B cell (primary cell): ENCODE measurements at regions of chr10 and their contacts with region 1.

Region 1: DNA sequence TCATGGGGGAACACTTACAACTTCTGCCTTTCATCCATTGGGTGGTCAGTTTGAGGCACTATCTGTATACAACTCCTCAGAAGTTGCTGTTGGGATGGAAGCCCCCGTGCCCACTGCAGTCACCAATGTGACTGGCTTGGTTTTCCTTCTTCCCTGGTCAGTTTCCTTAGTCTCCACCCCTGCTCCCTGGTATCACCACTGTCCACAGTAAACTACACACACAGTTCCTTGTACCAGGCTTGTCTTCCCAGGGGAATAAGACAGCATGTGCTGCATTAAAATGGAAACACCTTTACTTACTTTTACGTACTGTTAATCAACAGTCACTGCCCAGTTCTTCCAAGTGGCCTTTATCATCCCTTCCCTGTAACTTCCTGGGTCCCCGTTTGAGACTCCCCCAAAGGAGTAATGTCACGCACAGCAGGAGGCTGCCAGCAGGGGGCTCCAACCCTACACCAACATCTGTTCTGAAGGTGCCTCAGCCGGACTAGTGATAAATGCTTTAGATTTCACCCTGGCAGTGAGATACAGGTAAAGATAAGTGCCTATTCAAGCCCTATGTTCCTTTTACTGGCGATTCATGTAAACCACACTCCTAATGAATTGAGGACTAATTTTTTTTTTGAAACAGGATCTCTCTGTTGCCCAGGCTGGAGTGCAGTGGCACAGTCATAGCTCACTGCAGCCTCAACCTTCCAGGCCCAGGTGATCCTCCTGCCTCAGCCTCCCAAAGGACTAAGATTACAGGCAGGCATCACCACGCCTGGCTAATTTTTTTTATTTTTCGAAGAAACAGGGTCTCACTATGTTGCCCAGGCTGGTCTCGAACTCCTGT is 45.3 kb upstream of the PIK3AP1 start:
- DNase-seq: peak; percentile 83
- ATAC-seq: peak; percentile 74
- H3K4me3 ChIP-seq: no peak overlapping the region
- H3K4me3 Mint-ChIP-seq: peak overlapping the region; percentile 60
- H3K27ac ChIP-seq: peak overlapping the region; percentile 30 to 54
- H3K27ac Mint-ChIP-seq: peak overlapping the region; percentile 77
- H3K4me1 ChIP-seq: peaks cover 33% of the 10 kb centered on the region in 2 donors
- H3K4me1 Mint-ChIP-seq: peaks cover 39% of the 10 kb centered on the region
- H3K27me3 ChIP-seq: no peaks in the 10 kb centered on the region
- H3K27me3 Mint-ChIP-seq: no peaks in the 10 kb centered on the region
- CTCF ChIP-seq: peak; percentile 90

Region 2: DNA sequence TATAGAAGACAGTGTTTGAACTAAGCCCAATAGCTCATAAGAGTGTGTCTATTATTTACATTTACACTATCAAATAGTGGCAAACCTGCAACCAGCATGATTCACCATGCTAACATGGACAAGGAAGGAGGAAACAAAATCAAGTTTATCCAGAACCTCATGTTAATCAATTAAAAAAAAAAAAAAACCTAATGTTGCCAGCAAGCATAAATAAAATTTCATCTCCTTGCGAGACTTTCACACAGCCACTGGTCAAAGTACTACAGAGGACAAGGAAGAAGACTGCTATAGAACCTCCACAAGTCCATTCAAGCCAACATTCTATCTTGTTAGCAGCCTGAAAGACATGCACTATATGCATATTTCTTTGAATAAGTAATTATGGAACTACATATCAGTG is 188.6 kb before region 1 on chr10:
- CTCF ChIA-PET with region 1: no interaction called
- POLR2A ChIA-PET with region 1: no interaction called
- intact Hi-C with region 1: no loop called
- DNase-seq: no peak
- ATAC-seq: no peak
- H3K4me3 ChIP-seq: no peak overlapping the region
- H3K4me3 Mint-ChIP-seq: no peak overlapping the region
- H3K27ac ChIP-seq: no peak overlapping the region
- H3K27ac Mint-ChIP-seq: no peak overlapping the region
- H3K4me1 ChIP-seq: peaks cover 6 to 18% of the 10 kb centered on the region in 2 donors
- H3K4me1 Mint-ChIP-seq: peaks cover 52% of the 10 kb centered on the region
- H3K27me3 ChIP-seq: no peaks in the 10 kb centered on the region
- H3K27me3 Mint-ChIP-seq: no peaks in the 10 kb centered on the region
- CTCF ChIP-seq: no peak

Region 3: DNA sequence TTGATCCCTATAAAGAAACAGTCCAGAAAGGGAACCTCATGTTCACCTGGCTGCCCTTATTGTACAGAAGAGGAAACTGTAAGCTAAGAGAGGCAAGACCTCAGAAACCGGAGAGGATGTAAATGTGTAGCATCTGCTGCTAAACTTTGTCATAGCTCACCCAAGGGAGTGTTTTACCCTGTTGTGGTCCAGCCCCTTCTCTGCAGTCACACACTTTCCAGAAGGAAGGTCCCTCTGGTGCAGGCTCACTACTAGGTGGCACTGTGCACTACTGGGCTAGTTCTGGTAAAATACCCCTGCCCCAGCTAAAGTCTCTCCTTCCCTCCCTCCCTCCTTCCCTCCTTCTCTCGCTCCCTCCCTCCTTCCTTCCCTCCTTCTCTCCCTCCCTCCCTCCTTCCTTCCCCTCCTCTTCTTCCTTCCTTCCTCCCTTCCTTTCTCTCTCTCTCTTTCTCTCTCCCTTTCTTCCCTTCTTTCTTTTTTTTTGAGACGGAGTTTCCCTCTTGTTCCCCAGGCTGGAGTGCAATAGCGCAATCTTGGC is 24.0 kb after region 1 on chr10:
- CTCF ChIA-PET with region 1: interaction called, 7 read pairs
- POLR2A ChIA-PET with region 1: no interaction called
- intact Hi-C with region 1: loop called (anchors 2 kb)
- DNase-seq: peak; percentile 88
- ATAC-seq: peak; percentile 94
- H3K4me3 ChIP-seq: no peak overlapping the region
- H3K4me3 Mint-ChIP-seq: peak overlapping the region; percentile 62
- H3K27ac ChIP-seq: peak overlapping the region; percentile 64 to 87
- H3K27ac Mint-ChIP-seq: peak overlapping the region; percentile 75
- H3K4me1 ChIP-seq: peaks cover 16 to 20% of the 10 kb centered on the region in 2 donors
- H3K4me1 Mint-ChIP-seq: peaks cover 18% of the 10 kb centered on the region
- H3K27me3 ChIP-seq: no peaks in the 10 kb centered on the region
- H3K27me3 Mint-ChIP-seq: no peaks in the 10 kb centered on the region
- CTCF ChIP-seq: no peak

Region 4: DNA sequence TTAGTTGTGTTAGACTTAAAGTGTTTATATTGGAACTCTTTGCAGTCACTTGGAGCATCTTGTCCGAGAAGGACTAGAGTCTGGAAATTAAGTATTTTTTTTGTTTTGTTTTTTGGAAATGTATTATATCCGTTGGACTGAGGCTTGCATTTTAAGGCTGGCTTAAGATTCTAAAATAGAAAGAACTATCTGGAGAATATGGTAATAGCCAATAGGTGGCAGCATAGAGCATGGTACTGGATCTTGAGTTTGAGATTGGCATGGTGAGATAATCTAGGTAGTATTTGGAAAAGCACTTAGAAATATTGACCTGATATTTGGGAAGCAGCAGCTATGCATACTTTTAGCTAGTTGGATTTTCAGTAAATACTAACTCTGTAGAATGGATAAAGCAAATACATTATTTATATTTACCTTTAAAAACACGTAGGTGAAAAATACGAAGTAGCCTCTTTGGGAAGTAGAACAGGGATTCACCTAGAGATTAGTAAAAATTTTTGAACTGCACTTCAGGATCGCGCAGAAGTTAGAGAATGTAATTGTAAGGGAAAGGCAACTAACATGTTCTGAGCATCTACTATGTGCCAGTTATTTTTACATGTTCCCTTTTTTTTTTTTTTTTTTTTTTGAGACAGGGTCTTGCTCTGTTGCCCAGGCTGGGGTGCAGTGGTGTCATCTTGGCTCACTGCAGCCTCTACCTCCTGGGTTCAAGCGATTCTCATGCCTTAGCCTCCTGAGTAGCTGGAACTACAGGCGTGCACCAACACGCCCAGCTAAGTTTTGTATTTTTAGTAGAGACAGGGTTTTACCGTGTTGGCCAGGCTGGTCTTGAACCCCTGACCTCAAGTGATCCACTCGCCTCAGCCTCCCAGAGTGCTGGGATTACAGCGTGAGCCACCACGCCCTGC is 145.1 kb after region 1 on chr10:
- CTCF ChIA-PET with region 1: interaction called, 3 read pairs
- POLR2A ChIA-PET with region 1: no interaction called
- intact Hi-C with region 1: loop called (anchors 1 kb)
- DNase-seq: peak; percentile 63
- ATAC-seq: peak; percentile 53
- H3K4me3 ChIP-seq: no peak overlapping the region
- H3K4me3 Mint-ChIP-seq: no peak overlapping the region
- H3K27ac ChIP-seq: peak overlapping the region in 1 of 2 donors; percentile 33
- H3K27ac Mint-ChIP-seq: no peak overlapping the region
- H3K4me1 ChIP-seq: no peaks in the 10 kb centered on the region
- H3K4me1 Mint-ChIP-seq: peaks cover 13% of the 10 kb centered on the region
- H3K27me3 ChIP-seq: no peaks in the 10 kb centered on the region
- H3K27me3 Mint-ChIP-seq: no peaks in the 10 kb centered on the region
- CTCF ChIP-seq: peak; percentile 91

Region 5: DNA sequence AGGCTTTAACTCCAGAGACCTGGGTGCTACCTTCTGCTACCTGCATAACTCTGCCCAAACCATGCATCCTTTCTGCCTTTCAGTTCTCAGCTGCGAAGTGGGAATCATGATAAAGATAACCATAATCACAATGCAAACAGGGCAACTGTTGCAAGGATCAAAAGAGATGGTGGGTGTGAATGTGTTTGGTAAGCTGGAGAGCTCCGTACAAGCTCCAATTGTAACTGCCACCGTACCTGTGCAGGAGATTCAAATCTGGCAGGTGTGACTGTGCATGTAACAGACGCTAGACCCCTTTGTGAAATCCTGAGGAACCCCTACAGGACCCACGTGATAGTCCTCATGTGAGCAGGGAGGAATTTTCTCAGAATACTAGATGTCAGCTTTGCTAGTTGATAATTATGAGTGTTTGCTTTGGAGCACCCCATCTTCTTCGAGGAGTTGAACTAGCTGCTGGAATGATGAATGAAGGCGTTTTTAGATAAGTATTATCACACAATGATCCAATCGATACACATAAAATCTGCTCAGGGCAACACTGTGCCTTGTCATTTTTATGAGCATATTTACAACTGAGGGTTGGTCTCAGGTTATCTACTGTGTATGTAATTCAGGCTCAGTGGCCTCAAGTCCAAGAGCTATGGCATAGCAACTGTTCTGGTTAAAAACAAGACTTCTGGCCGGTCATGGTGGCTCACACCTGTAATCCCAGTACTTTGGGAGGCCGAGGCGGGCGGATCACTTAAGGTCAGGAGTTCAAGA is 584.3 kb after region 1 on chr10:
- CTCF ChIA-PET with region 1: no interaction called
- POLR2A ChIA-PET with region 1: no interaction called
- intact Hi-C with region 1: no loop called
- DNase-seq: no peak
- ATAC-seq: no peak
- H3K4me3 ChIP-seq: no peak overlapping the region
- H3K4me3 Mint-ChIP-seq: no peak overlapping the region
- H3K27ac ChIP-seq: no peak overlapping the region
- H3K27ac Mint-ChIP-seq: no peak overlapping the region
- H3K4me1 ChIP-seq: no peaks in the 10 kb centered on the region
- H3K4me1 Mint-ChIP-seq: no peaks in the 10 kb centered on the region
- H3K27me3 ChIP-seq: no peaks in the 10 kb centered on the region
- H3K27me3 Mint-ChIP-seq: no peaks in the 10 kb centered on the region
- CTCF ChIP-seq: no peak